Dorsolateral prefrontal cortex (tissue), 120 donors: ENCODE measurements at regions of chr22 and their contacts with region 1.

Region 1: DNA sequence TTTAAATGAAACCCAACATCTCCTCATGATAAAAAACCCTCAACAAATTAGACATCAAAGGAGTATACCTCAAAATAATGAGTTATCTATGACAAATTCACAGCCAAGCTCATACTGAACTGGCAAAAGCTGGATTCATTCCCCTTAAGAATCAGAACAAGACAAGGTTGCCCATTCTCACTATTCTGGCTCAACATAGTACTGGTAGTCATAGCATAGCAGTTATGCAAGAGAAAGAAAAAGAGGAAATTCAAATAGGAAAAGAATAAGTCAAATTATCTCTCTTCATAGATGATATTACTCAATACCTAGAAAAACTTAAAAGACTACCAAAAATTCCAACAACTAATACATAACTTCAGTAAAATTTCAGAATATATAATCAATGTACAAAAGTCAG is 29.4 kb upstream of the XKR3 start:
- DNase-seq: no peak
- H3K4me3 ChIP-seq: no peak overlapping the region
- H3K27ac ChIP-seq: no peak overlapping the region
- H3K27me3 ChIP-seq: peaks cover 0 to 11% (median 0%) of the 10 kb centered on the region in 45 donors
- CTCF ChIP-seq: no peak

Region 2: DNA sequence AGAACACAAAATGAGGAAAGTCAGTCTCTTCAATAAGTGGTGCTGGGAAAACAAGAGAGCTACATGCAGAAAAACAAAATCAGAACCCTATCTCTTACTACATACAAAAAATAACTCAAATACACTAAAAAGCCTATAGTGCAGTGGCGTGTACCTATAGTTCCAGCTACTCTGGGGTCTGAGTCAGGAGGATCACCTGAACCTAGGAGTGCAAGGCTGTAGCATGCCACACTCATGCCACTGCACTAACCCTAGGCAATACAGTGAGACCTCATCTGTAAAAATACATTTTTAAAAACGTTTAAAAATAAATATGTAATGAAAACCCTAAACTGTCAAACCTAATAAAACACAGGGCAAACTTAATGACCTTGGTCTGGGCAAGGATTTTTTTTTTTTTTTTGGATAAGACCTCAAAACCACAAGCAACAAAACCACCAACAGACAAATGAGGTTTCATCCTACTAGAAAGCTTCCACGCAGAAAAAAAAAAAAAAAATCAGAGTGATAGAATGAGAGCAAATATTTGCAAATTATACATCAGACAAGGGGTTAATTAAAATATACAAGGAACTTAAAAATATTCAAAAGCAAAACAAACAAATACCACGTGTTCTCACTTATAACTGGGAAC is 64.7 kb before region 1 on chr22:
- intact Hi-C with region 1: loop called in 1 of 2 experiments (anchors 10 kb)
- DNase-seq: no peak
- H3K4me3 ChIP-seq: no peak overlapping the region
- H3K27ac ChIP-seq: no peak overlapping the region
- H3K27me3 ChIP-seq: peaks cover 0 to 10% (median 0%) of the 10 kb centered on the region in 45 donors
- CTCF ChIP-seq: no peak